ENCODE measurements at regions of chr10 and their contacts with region 1.

Region 1: GRCh38 chr10:100817268-100817839 is 72.0 kb downstream of the PAX2 start:
- DNase-seq: peak; percentile 72
- ATAC-seq: peak; percentile 97
- H3K4me3 Mint-ChIP-seq: no peak overlapping the region
- H3K27ac Mint-ChIP-seq: no peak overlapping the region
- H3K4me1 Mint-ChIP-seq: peaks cover 24% of the 10 kb centered on the region
- H3K27me3 Mint-ChIP-seq: peaks cover 32% of the 10 kb centered on the region
- CTCF ChIP-seq: 0 out of 2 replicates have a peak, but pooled peaks have one; percentile 18

Region 2: GRCh38 chr10:100751211-100751933 is 66.0 kb before region 1 on chr10:
- CTCF ChIA-PET with region 1: interaction called, 16 read pairs
- POLR2A ChIA-PET with region 1: no interaction called
- DNase-seq: no peak
- ATAC-seq: no peak
- H3K4me3 Mint-ChIP-seq: no peak overlapping the region
- H3K27ac Mint-ChIP-seq: no peak overlapping the region
- H3K4me1 Mint-ChIP-seq: peaks cover 21% of the 10 kb centered on the region
- H3K27me3 Mint-ChIP-seq: peaks cover 100% of the 10 kb centered on the region
- CTCF ChIP-seq: no peak

Region 3: DNA sequence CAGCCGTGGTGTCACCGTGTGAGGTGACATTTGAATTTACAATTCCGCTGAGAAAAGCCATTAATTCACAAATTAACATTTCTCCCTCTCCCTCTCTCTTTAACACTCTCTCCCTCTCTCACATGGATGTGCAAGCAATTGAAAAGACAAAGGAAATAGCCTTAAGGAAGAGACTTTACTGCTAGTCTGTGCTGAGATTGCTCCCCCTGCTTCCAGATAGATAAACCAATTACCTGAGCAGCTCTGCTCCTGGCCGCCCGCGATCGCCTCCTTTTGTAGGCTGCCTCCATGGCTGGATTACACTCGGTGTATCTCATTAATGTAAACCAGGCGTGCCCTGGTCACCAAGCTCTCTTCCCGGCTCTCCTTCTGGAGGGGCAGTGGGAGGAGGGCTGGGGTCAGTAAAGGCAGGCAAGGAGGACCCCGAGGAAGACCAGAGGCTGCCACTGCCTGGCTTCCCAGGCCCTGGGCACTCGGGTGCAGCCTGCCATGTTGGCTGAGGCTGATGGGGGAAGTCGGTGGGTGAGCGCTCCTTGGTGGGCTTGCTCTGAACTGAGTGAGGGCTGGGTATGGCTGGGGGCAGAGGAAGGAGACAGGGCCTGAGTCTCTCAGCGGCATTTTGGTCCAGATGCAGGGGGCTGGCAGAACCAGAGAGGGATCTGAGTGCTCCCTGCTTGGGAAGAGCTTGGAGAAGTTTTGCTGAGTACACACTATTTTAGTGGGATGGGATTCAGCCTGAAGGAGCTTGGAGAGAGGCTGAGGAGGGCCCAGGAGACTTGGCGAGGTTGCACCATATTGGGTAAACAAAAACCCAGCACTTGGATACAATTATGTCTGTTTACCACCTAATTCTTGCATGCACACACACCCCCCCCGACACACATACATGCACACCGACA is 29.1 kb before region 1 on chr10:
- CTCF ChIA-PET with region 1: interaction called, 10 read pairs
- POLR2A ChIA-PET with region 1: no interaction called
- DNase-seq: peak; percentile 38
- ATAC-seq: peak; percentile 61
- H3K4me3 Mint-ChIP-seq: no peak overlapping the region
- H3K27ac Mint-ChIP-seq: peak overlapping the region; percentile 42
- H3K4me1 Mint-ChIP-seq: peaks cover 38% of the 10 kb centered on the region
- H3K27me3 Mint-ChIP-seq: peaks cover 11% of the 10 kb centered on the region
- CTCF ChIP-seq: no peak

Region 4: GRCh38 chr10:101130984-101131961 is 313.9 kb after region 1 on chr10 and contains the start of gene TLX1:
- CTCF ChIA-PET with region 1: no interaction called
- POLR2A ChIA-PET with region 1: no interaction called
- DNase-seq: peak; percentile 74
- ATAC-seq: peak; percentile 46
- H3K4me3 Mint-ChIP-seq: peak within 1 kb of the TSS; percentile 59
- H3K27ac Mint-ChIP-seq: no peak within 1 kb of the TSS
- H3K4me1 Mint-ChIP-seq: peaks cover 39% of the 10 kb centered on the region
- H3K27me3 Mint-ChIP-seq: peaks cover 98% of the 10 kb centered on the region
- CTCF ChIP-seq: no peak
- total RNA-seq, gene TLX1: 2.1 to 4.6 TPM (median 2.3 TPM) in 3 replicates

Measured in WTC11 (cell line).